CD4-positive, alpha-beta T cell (primary cell): ENCODE measurements at regions of chr2 and their contacts with region 1.

Region 1: GRCh38 chr2:37585982-37586621 is 85.3 kb downstream of the CDC42EP3 start:
- DNase-seq: peak; percentile 38 to 92 (median 67)
- ATAC-seq: peak; percentile 85
- H3K4me3 ChIP-seq: peak overlapping the region; percentile 6
- H3K4me3 Mint-ChIP-seq: peak overlapping the region; percentile 63
- H3K27ac ChIP-seq: peak overlapping the region; percentile 65 to 67
- H3K27ac Mint-ChIP-seq: peak overlapping the region; percentile 86
- H3K4me1 ChIP-seq: peaks cover 62% of the 10 kb centered on the region
- H3K4me1 Mint-ChIP-seq: peaks cover 89% of the 10 kb centered on the region
- H3K27me3 ChIP-seq: no peaks in the 10 kb centered on the region
- H3K27me3 Mint-ChIP-seq: no peaks in the 10 kb centered on the region
- CTCF ChIP-seq: no peak

Region 2: GRCh38 chr2:37537316-37537715 is 48.8 kb before region 1 on chr2:
- CTCF ChIA-PET with region 1: interaction called, 3 read pairs
- POLR2A ChIA-PET with region 1: interaction called, 3 read pairs
- intact Hi-C with region 1: loop called in 1 of 2 experiments (anchors 5 kb)
- DNase-seq: no peak
- ATAC-seq: no peak
- H3K4me3 ChIP-seq: no peak overlapping the region
- H3K4me3 Mint-ChIP-seq: no peak overlapping the region
- H3K27ac ChIP-seq: no peak overlapping the region
- H3K27ac Mint-ChIP-seq: no peak overlapping the region
- H3K4me1 ChIP-seq: no peaks in the 10 kb centered on the region
- H3K4me1 Mint-ChIP-seq: peaks cover 10% of the 10 kb centered on the region
- H3K27me3 ChIP-seq: no peaks in the 10 kb centered on the region
- H3K27me3 Mint-ChIP-seq: no peaks in the 10 kb centered on the region
- CTCF ChIP-seq: no peak

Region 3: DNA sequence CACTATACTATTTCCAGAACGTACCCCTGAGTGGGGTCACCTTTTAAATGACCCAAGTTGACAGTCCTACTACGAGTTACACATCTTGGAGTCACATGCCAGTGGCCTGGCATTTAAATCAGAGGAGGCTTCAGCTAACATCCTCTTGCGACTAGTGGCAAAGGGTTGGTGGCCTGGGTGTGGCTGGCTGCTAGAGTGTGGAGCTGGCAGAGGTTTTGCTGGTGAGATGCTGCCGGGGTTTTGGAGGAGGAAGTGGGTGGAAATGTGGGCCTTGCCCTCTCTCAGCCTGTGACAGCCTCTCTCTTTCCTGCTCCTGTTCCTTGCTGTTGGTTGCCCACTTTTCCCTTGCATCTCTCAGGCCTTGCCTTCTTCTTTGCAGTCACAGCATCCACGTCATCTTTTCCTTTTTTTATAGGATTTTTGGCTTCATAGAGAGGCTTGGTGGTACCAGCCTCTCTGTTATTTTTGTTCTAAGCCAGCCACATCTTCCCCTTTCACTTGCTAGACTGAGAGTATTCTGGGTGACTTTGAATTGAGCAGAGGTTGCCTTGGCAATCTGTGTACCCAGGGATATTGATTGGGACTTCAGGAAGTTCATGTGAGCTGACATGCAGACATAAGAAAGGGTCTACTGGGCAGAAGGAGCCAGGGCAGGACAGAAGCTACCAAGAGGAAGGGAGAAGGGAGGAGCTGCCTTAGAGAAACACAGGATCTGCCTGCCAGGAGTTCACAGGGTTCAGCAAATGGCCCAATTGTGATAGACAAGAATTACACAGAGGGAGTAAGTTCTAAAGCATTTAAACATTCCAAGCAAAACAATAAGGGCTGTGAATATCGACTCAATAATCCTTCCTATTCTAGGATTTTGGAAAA is 29.9 kb after region 1 on chr2:
- CTCF ChIA-PET with region 1: interaction called, 3 read pairs
- POLR2A ChIA-PET with region 1: interaction called, 13 read pairs
- intact Hi-C with region 1: no loop called
- DNase-seq: peak; percentile 48 to 92 (median 66)
- ATAC-seq: peak; percentile 96
- H3K4me3 ChIP-seq: no peak overlapping the region
- H3K4me3 Mint-ChIP-seq: peak overlapping the region; percentile 32
- H3K27ac ChIP-seq: peak overlapping the region; percentile 48 to 74
- H3K27ac Mint-ChIP-seq: peak overlapping the region; percentile 79
- H3K4me1 ChIP-seq: peaks cover 52% of the 10 kb centered on the region
- H3K4me1 Mint-ChIP-seq: peaks cover 65% of the 10 kb centered on the region
- H3K27me3 ChIP-seq: no peaks in the 10 kb centered on the region
- H3K27me3 Mint-ChIP-seq: no peaks in the 10 kb centered on the region
- CTCF ChIP-seq: no peak

Region 4: GRCh38 chr2:37623971-37624900 is 38.1 kb after region 1 on chr2:
- CTCF ChIA-PET with region 1: interaction called, 10 read pairs
- POLR2A ChIA-PET with region 1: interaction called, 12 read pairs
- intact Hi-C with region 1: loop called in 1 of 2 experiments (anchors 2 kb)
- DNase-seq: peak in 4 of 14 experiments; percentile 34 to 69 (median 62)
- ATAC-seq: peak; percentile 35
- H3K4me3 ChIP-seq: no peak overlapping the region
- H3K4me3 Mint-ChIP-seq: peak overlapping the region; percentile 61
- H3K27ac ChIP-seq: peak overlapping the region; percentile 0 to 71
- H3K27ac Mint-ChIP-seq: peak overlapping the region; percentile 85
- H3K4me1 ChIP-seq: peaks cover 59% of the 10 kb centered on the region
- H3K4me1 Mint-ChIP-seq: peaks cover 70% of the 10 kb centered on the region
- H3K27me3 ChIP-seq: no peaks in the 10 kb centered on the region
- H3K27me3 Mint-ChIP-seq: no peaks in the 10 kb centered on the region
- CTCF ChIP-seq: no peak

Region 5: GRCh38 chr2:37635504-37636380 is 49.6 kb after region 1 on chr2:
- CTCF ChIA-PET with region 1: no interaction called
- POLR2A ChIA-PET with region 1: interaction called, 5 read pairs
- intact Hi-C with region 1: loop called in 1 of 2 experiments (anchors 1 kb)
- DNase-seq: peak; percentile 24 to 93 (median 53)
- ATAC-seq: peak; percentile 89
- H3K4me3 ChIP-seq: no peak overlapping the region
- H3K4me3 Mint-ChIP-seq: peak overlapping the region; percentile 8
- H3K27ac ChIP-seq: peak overlapping the region; percentile 70 to 75
- H3K27ac Mint-ChIP-seq: peak overlapping the region; percentile 88
- H3K4me1 ChIP-seq: peaks cover 47% of the 10 kb centered on the region
- H3K4me1 Mint-ChIP-seq: peaks cover 76% of the 10 kb centered on the region
- H3K27me3 ChIP-seq: no peaks in the 10 kb centered on the region
- H3K27me3 Mint-ChIP-seq: no peaks in the 10 kb centered on the region
- CTCF ChIP-seq: no peak

Region 6: GRCh38 chr2:37648331-37649011 is 62.4 kb after region 1 on chr2:
- CTCF ChIA-PET with region 1: interaction called, 10 read pairs
- POLR2A ChIA-PET with region 1: interaction called, 8 read pairs
- intact Hi-C with region 1: no loop called
- DNase-seq: peak in 13 of 14 experiments; percentile 17 to 77 (median 43)
- ATAC-seq: peak; percentile 67
- H3K4me3 ChIP-seq: peak overlapping the region; percentile 4
- H3K4me3 Mint-ChIP-seq: peak overlapping the region; percentile 44
- H3K27ac ChIP-seq: peak overlapping the region; percentile 24 to 64
- H3K27ac Mint-ChIP-seq: peak overlapping the region; percentile 79
- H3K4me1 ChIP-seq: peaks cover 82% of the 10 kb centered on the region
- H3K4me1 Mint-ChIP-seq: peaks cover 91% of the 10 kb centered on the region
- H3K27me3 ChIP-seq: no peaks in the 10 kb centered on the region
- H3K27me3 Mint-ChIP-seq: no peaks in the 10 kb centered on the region
- CTCF ChIP-seq: peak; percentile 19